CD4-positive, alpha-beta memory T cell (primary cell): ENCODE measurements at regions of chr14 and their contacts with region 1.

Region 1: DNA sequence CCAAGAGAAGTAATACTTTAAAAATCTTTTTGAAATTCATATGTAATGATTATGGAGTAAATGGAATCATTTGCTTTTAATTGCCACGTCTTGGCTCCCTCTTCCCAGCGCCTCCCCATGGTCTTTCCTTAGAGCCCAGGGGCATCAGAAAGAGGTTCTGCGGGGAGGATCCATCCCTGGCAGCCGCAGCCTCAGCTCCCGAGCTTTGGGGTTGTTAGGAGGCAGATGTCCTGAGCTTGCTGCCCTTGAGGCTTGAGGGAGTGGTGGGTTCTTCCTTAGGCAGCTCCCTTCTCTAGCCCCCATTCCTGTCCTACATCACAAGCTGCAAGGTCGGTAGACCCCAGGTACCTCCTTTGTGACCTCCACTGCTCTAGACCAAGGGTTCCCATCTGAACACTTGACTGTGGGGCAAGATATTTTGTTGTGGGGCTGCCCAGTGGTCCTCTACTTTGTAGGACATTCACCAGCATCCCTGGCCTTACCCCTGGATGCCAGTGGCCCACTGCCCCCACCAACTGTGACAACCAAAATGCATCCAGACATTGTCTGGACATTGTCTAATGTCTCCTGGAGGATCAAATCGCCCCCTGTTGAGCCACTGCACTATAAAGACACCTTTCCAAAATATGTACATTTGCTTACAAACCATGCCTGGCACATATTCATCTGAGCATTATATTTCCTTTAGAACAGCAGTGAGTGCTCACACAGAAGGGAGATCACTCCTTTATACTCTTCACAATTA is 6.3 kb downstream of the PPP2R5C start:
- DNase-seq: no peak
- H3K4me3 ChIP-seq: no peak overlapping the region
- H3K4me3 Mint-ChIP-seq: no peak overlapping the region
- H3K27ac ChIP-seq: no peak overlapping the region
- H3K27ac Mint-ChIP-seq: no peak overlapping the region
- H3K4me1 ChIP-seq: peaks cover 45% of the 10 kb centered on the region
- H3K4me1 Mint-ChIP-seq: peaks cover 29 to 37% (median 34%) of the 10 kb centered on the region in 4 donors
- H3K27me3 ChIP-seq: no peaks in the 10 kb centered on the region
- H3K27me3 Mint-ChIP-seq: no peaks in the 10 kb centered on the region

Region 2: DNA sequence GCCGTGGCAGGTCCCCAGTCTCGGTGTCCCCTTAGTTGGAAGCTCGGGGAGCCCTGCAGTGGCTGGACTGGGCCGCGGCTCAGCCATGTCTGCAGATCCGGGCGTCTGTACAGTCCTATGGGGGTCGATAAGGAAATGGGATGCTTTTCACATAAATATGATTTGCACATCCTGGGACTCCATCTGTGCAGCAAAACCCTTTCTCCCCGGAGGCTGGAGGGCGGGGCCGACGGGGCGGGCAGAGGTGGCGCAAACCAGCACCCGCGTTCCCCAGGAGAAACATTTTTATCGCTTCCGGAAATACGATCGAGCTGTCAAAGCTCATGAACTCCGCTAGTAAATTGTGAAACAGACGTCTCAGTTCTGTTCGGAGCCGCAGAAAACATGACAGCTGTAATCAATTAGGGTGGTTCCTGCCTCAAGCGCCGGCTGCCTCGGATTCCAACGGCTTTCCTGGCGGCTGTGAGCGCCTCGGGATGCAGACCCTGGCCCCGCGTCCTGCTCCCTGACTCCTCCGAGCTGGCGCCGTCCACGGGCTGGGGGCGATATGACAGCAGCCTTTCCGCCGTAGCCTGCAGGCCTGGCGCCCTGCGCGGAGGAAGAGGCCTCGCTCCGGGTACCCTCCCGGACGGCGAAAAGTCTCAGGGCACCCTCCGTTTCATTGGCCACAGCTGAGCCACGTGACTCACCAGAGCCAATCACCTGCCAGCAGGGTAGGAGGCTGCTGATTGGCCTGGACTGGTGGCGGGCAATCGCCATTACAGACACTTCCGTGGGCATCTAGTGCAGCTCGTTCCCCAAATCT is 183.5 kb before region 1 on chr14:
- CTCF ChIA-PET with region 1: no interaction called
- POLR2A ChIA-PET with region 1: no interaction called
- intact Hi-C with region 1: no loop called
- DNase-seq: peak in 1 of 5 donors; percentile 8
- H3K4me3 ChIP-seq: no peak overlapping the region
- H3K4me3 Mint-ChIP-seq: peak overlapping the region in 3 of 8 donors; percentile 8 to 29 (median 26)
- H3K27ac ChIP-seq: no peak overlapping the region
- H3K27ac Mint-ChIP-seq: no peak overlapping the region
- H3K4me1 ChIP-seq: no peaks in the 10 kb centered on the region
- H3K4me1 Mint-ChIP-seq: no peaks in the 10 kb centered on the region
- H3K27me3 ChIP-seq: no peaks in the 10 kb centered on the region
- H3K27me3 Mint-ChIP-seq: peaks cover 0 to 7% of the 10 kb centered on the region in 2 donors

Region 3: GRCh38 chr14:101687756-101688546 is 79.8 kb before region 1 on chr14:
- CTCF ChIA-PET with region 1: no interaction called
- POLR2A ChIA-PET with region 1: no interaction called
- intact Hi-C with region 1: no loop called
- DNase-seq: no peak
- H3K4me3 ChIP-seq: no peak overlapping the region
- H3K4me3 Mint-ChIP-seq: no peak overlapping the region
- H3K27ac ChIP-seq: no peak overlapping the region
- H3K27ac Mint-ChIP-seq: no peak overlapping the region
- H3K4me1 ChIP-seq: no peaks in the 10 kb centered on the region
- H3K4me1 Mint-ChIP-seq: no peaks in the 10 kb centered on the region
- H3K27me3 ChIP-seq: peaks cover 3% of the 10 kb centered on the region
- H3K27me3 Mint-ChIP-seq: peaks cover 3 to 10% of the 10 kb centered on the region in 2 donors

Region 4: DNA sequence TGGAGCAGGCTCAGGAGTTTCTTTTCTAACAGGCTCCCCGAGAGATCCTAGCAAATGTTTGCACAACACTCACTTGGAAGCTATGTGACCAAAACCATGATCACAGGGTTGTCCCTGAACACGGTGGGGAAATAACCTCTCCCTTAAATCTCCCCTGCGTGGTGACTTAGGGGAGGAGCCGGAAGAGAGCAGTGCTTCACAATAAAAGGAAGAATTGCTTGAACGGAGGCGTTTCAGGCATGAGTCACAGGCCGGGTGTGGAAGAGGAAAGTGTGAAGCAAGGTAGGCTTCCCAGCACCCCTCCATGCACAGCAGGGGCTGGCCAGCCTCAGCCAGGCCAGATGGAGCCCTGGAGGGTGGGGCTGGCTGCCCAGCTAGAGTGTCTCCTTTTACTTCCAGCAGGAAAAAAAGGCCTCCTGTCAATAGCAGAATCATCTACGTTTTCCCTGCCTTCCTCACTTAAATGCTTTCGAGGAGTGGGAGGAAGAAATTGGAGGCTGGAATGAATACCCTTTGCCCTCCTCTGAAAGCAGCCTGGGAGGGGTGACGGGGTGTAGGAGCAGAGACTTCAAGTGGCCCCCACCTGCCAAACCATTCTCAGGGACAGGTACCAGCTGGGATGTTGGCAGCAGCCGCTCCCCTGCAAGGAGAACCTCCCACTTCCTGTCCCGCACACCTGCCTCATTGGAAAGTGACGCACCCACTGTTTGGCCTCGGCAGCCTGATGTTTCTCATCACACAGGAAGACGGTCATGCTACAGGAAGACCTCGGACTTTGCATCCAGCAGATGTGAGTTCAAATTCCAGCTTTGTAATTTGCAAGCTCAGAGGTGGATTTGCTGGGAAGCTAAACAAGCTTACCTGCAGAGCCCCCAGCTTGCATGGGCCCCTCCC is 36.4 kb before region 1 on chr14:
- CTCF ChIA-PET with region 1: interaction called, 20 read pairs
- POLR2A ChIA-PET with region 1: interaction called, 18 read pairs
- intact Hi-C with region 1: no loop called
- DNase-seq: peak; percentile 83 to 96 (median 83)
- H3K4me3 ChIP-seq: peak overlapping the region; percentile 31 to 58
- H3K4me3 Mint-ChIP-seq: peak overlapping the region; percentile 68 to 86 (median 82)
- H3K27ac ChIP-seq: peak overlapping the region; percentile 75
- H3K27ac Mint-ChIP-seq: peak overlapping the region; percentile 85 to 100 (median 99)
- H3K4me1 ChIP-seq: peaks cover 35% of the 10 kb centered on the region
- H3K4me1 Mint-ChIP-seq: peaks cover 29 to 52% (median 42%) of the 10 kb centered on the region in 4 donors
- H3K27me3 ChIP-seq: no peaks in the 10 kb centered on the region
- H3K27me3 Mint-ChIP-seq: no peaks in the 10 kb centered on the region

Region 5: GRCh38 chr14:101791919-101792572 is 24.3 kb after region 1 on chr14:
- CTCF ChIA-PET with region 1: interaction called, 15 read pairs
- POLR2A ChIA-PET with region 1: interaction called, 8 read pairs
- intact Hi-C with region 1: no loop called
- DNase-seq: peak in 4 of 5 donors; percentile 42 to 54 (median 44)
- H3K4me3 ChIP-seq: peak overlapping the region; percentile 13 to 41
- H3K4me3 Mint-ChIP-seq: peak overlapping the region; percentile 66 to 90 (median 80)
- H3K27ac ChIP-seq: peak overlapping the region; percentile 58
- H3K27ac Mint-ChIP-seq: peak overlapping the region; percentile 81 to 95 (median 86)
- H3K4me1 ChIP-seq: peaks cover 14% of the 10 kb centered on the region
- H3K4me1 Mint-ChIP-seq: peaks cover 18 to 36% (median 26%) of the 10 kb centered on the region in 4 donors
- H3K27me3 ChIP-seq: no peaks in the 10 kb centered on the region
- H3K27me3 Mint-ChIP-seq: no peaks in the 10 kb centered on the region

Region 6: DNA sequence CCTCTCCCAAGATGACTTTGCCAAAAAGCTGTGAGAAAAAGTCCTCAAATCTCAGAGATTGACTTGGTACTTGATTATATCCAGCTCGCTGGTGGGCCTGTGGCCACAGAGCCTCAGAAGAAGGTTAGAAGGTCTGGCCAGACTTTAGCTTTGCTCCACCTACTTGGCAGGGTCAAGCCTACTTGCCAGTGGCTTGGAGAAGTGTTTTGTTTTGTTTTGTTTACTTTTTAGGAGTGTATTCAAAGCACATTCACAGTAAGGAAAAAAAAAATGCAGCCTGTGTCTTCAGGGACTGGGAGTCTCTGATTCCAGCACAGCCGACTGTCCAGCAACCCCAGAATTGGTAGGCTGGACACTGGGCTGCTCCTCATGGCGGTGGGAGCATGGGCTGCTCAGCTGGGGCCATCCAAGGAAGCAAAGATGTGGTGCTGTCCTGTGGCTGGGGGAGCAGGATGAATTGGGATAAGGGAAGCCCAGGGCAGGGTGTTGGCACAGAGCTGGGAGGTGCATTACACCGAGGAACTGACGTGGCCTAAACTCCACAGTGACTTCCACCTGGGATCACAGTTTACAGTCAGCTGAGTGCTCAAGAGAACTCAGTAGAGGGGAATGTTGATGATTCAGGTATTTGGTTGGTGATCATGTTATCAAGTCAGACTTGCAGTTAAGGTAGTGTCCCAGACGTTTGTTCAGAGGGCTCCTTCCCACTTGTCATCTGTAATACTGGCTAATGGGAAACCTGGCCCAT is 67.2 kb after region 1 on chr14:
- CTCF ChIA-PET with region 1: interaction called, 112 read pairs
- POLR2A ChIA-PET with region 1: interaction called, 26 read pairs
- intact Hi-C with region 1: no loop called
- DNase-seq: no peak
- H3K4me3 ChIP-seq: no peak overlapping the region
- H3K4me3 Mint-ChIP-seq: peak overlapping the region in 5 of 8 donors; percentile 15 to 62 (median 35)
- H3K27ac ChIP-seq: peak overlapping the region; percentile 31
- H3K27ac Mint-ChIP-seq: peak overlapping the region; percentile 65 to 97 (median 83)
- H3K4me1 ChIP-seq: peaks cover 100% of the 10 kb centered on the region
- H3K4me1 Mint-ChIP-seq: peaks cover 61 to 99% (median 82%) of the 10 kb centered on the region in 4 donors
- H3K27me3 ChIP-seq: no peaks in the 10 kb centered on the region
- H3K27me3 Mint-ChIP-seq: no peaks in the 10 kb centered on the region

Region 7: DNA sequence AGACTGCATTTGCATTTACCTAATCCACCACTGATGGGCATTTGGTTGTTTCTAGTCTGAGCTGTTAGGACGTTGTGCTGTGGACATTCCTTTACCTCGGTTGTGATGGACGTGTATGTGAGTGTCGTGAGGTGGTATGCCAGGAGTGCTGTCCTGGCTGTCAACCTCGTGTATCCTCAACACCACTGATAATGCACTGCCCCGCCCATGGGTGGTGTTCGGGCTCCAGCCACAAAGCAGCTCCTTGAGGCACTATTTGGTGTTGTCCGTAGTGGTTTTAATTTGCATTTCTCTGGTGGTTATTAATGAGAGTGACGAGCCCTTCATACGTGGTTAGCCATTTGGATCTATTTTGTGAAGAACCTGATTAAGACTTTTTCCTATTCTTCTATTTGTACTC is 81.3 kb after region 1 on chr14:
- CTCF ChIA-PET with region 1: interaction called, 112 read pairs
- POLR2A ChIA-PET with region 1: interaction called, 33 read pairs
- intact Hi-C with region 1: no loop called
- DNase-seq: no peak
- H3K4me3 ChIP-seq: no peak overlapping the region
- H3K4me3 Mint-ChIP-seq: peak overlapping the region in 7 of 8 donors; percentile 2 to 89 (median 73)
- H3K27ac ChIP-seq: peak overlapping the region; percentile 20
- H3K27ac Mint-ChIP-seq: peak overlapping the region; percentile 73 to 96 (median 92)
- H3K4me1 ChIP-seq: peaks cover 98% of the 10 kb centered on the region
- H3K4me1 Mint-ChIP-seq: peaks cover 77 to 99% (median 89%) of the 10 kb centered on the region in 4 donors
- H3K27me3 ChIP-seq: no peaks in the 10 kb centered on the region
- H3K27me3 Mint-ChIP-seq: no peaks in the 10 kb centered on the region

Region 8: GRCh38 chr14:101862177-101862576 is 94.4 kb after region 1 on chr14:
- CTCF ChIA-PET with region 1: interaction called, 12 read pairs
- POLR2A ChIA-PET with region 1: interaction called, 4 read pairs
- intact Hi-C with region 1: no loop called
- DNase-seq: no peak
- H3K4me3 ChIP-seq: no peak overlapping the region
- H3K4me3 Mint-ChIP-seq: no peak overlapping the region
- H3K27ac ChIP-seq: no peak overlapping the region
- H3K27ac Mint-ChIP-seq: peak overlapping the region in 4 of 7 donors; percentile 18 to 74 (median 70)
- H3K4me1 ChIP-seq: peaks cover 51% of the 10 kb centered on the region
- H3K4me1 Mint-ChIP-seq: peaks cover 34 to 76% (median 59%) of the 10 kb centered on the region in 4 donors
- H3K27me3 ChIP-seq: no peaks in the 10 kb centered on the region
- H3K27me3 Mint-ChIP-seq: no peaks in the 10 kb centered on the region

Region 9: DNA sequence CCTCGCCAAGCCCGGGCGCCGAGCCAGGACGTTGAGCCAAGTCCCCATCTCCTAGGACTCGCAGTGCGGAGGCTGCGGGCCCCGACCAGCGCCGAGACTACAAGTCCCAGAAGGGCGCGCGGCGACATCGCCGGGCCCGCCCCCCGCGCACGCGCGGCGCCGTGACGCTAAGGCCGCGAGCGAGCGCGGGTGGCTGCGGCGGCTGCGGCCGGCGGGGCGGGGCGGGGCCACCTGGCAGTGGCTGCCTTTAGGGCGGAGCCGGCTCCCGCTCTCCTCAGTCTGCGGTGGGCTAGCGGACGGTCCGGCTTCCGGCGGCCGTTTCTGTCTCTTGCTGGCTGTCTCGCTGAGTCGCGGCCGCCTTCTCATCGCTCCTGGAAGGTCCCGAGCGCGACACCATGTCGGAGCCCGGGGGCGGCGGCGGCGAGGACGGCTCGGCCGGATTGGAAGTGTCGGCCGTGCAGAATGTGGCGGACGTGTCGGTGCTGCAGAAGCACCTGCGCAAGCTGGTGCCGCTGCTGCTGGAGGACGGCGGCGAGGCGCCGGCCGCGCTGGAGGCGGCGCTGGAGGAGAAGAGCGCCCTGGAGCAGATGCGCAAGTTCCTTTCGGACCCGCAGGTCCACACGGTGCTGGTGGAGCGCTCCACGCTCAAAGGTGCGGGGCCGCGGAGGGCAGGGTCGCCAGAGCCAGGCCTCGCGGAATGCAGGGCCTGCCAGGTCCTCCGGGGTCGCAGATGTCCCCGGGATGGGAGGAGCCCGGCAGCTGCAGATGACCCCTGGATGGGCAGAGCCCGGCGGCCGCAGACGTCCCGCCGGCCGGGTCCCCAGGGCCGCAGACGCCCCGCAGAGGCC is 196.7 kb after region 1 on chr14 and contains the start of gene DYNC1H1:
- CTCF ChIA-PET with region 1: interaction called, 10 read pairs
- POLR2A ChIA-PET with region 1: interaction called, 4 read pairs
- intact Hi-C with region 1: loop called (anchors 2 kb)
- DNase-seq: peak; percentile 85 to 92 (median 89)
- H3K4me3 ChIP-seq: peak within 1 kb of the TSS; percentile 45 to 82
- H3K4me3 Mint-ChIP-seq: peak within 1 kb of the TSS; percentile 89 to 92 (median 91)
- H3K27ac ChIP-seq: peak within 1 kb of the TSS; percentile 79
- H3K27ac Mint-ChIP-seq: peak within 1 kb of the TSS; percentile 92 to 96 (median 93)
- H3K4me1 ChIP-seq: peaks cover 46% of the 10 kb centered on the region
- H3K4me1 Mint-ChIP-seq: peaks cover 27 to 61% (median 43%) of the 10 kb centered on the region in 4 donors
- H3K27me3 ChIP-seq: no peaks in the 10 kb centered on the region
- H3K27me3 Mint-ChIP-seq: no peaks in the 10 kb centered on the region
- total RNA-seq, gene DYNC1H1: 314 to 318 TPM

Region 10: GRCh38 chr14:102029956-102030355 is 262.2 kb after region 1 on chr14:
- CTCF ChIA-PET with region 1: no interaction called
- POLR2A ChIA-PET with region 1: no interaction called
- intact Hi-C with region 1: no loop called
- DNase-seq: no peak
- H3K4me3 ChIP-seq: no peak overlapping the region
- H3K4me3 Mint-ChIP-seq: no peak overlapping the region
- H3K27ac ChIP-seq: no peak overlapping the region
- H3K27ac Mint-ChIP-seq: peak overlapping the region in 1 of 7 donors; percentile 36
- H3K4me1 ChIP-seq: no peaks in the 10 kb centered on the region
- H3K4me1 Mint-ChIP-seq: no peaks in the 10 kb centered on the region
- H3K27me3 ChIP-seq: no peaks in the 10 kb centered on the region
- H3K27me3 Mint-ChIP-seq: no peaks in the 10 kb centered on the region